IMR-90 (cell line): ENCODE measurements at regions of chr13 and their contacts with region 1.

Region 1: GRCh38 chr13:96020155-96020575 is 33.0 kb downstream of the UGGT2 start:
- DNase-seq: peak; percentile 67
- ATAC-seq: peak; percentile 96
- H3K4me3 ChIP-seq: no peak overlapping the region
- H3K27ac ChIP-seq: no peak overlapping the region
- H3K4me1 ChIP-seq: no peaks in the 10 kb centered on the region
- H3K27me3 ChIP-seq: no peaks in the 10 kb centered on the region
- CTCF ChIP-seq: peak; percentile 63
- POLR2A ChIP-seq: no peak
- RAD21 ChIP-seq: peak; percentile 67

Region 2: GRCh38 chr13:95438297-95438696 is 581.9 kb before region 1 on chr13:
- CTCF ChIA-PET with region 1: no interaction called
- POLR2A ChIA-PET with region 1: no interaction called
- dilution Hi-C with region 1: no loop called
- in situ Hi-C with region 1: no loop called
- intact Hi-C with region 1: no loop called
- DNase-seq: no peak
- ATAC-seq: no peak
- H3K4me3 ChIP-seq: no peak overlapping the region
- H3K27ac ChIP-seq: no peak overlapping the region
- H3K4me1 ChIP-seq: no peaks in the 10 kb centered on the region
- H3K27me3 ChIP-seq: peaks cover 6% of the 10 kb centered on the region; the same call in 1 of the 2 replicates
- CTCF ChIP-seq: no peak
- POLR2A ChIP-seq: no peak
- RAD21 ChIP-seq: no peak

Region 3: DNA sequence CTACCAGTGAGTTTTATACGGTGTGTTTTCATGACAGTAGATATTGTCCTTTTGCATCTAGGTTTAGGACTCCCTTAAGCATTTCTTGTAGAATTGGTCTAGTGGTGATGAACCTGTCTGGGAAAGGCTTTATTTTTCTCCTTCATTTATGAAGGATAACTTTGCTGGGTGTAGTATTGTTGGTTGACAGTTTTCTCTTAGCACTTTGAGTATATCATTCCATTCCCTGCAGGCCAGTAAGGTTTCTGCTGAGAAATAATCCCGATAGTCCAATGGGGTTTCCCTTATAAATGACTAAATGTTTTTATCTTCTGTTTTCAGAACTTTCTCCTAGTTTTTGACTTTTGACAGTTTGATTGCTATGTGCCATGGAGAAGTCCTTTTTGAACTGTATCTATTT is 286.0 kb before region 1 on chr13:
- CTCF ChIA-PET with region 1: no interaction called
- POLR2A ChIA-PET with region 1: no interaction called
- dilution Hi-C with region 1: no loop called
- in situ Hi-C with region 1: no loop called
- intact Hi-C with region 1: no loop called
- DNase-seq: no peak
- ATAC-seq: no peak
- H3K4me3 ChIP-seq: no peak overlapping the region
- H3K27ac ChIP-seq: no peak overlapping the region
- H3K4me1 ChIP-seq: no peaks in the 10 kb centered on the region
- H3K27me3 ChIP-seq: no peaks in the 10 kb centered on the region
- CTCF ChIP-seq: no peak
- POLR2A ChIP-seq: no peak
- RAD21 ChIP-seq: no peak

Region 4: DNA sequence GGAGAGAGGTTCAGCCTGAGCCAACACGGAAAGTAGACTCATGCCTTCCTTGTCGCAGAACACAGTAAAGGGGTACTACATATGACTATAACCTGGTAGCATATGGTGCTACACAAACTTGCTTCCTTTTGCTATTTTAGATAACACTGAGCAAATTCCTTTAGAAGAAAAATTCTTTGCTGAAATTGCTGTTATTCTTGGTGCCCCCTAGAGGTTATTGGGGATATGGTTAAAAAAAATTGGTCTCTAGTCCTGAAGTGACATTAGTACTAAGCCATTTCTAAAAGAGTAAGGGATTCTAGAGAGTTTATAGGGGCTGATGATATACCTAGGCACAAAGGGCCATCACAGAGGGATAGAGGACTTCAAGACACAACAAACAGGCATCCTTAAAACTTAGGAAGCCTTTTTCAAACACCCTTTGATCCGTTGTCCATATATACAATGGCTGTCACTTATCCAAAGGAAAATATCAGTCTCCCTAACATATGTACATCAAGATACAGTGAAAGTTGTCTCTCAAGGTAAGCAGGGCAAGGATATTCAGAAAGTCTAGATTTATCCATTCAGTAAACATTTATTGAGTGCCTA is 55.9 kb after region 1 on chr13:
- CTCF ChIA-PET with region 1: interaction called, 3 read pairs
- POLR2A ChIA-PET with region 1: no interaction called
- dilution Hi-C with region 1: no loop called
- in situ Hi-C with region 1: no loop called
- intact Hi-C with region 1: loop called (anchors 2 kb)
- DNase-seq: peak; percentile 23
- ATAC-seq: peak; percentile 54; the same call in 1 of the 2 replicates
- H3K4me3 ChIP-seq: no peak overlapping the region
- H3K27ac ChIP-seq: no peak overlapping the region
- H3K4me1 ChIP-seq: no peaks in the 10 kb centered on the region
- H3K27me3 ChIP-seq: peaks cover 4% of the 10 kb centered on the region
- CTCF ChIP-seq: peak; percentile 61
- POLR2A ChIP-seq: no peak
- RAD21 ChIP-seq: no peak

Region 5: GRCh38 chr13:96817336-96817941 is 797.3 kb after region 1 on chr13:
- CTCF ChIA-PET with region 1: interaction called, 8 read pairs
- POLR2A ChIA-PET with region 1: no interaction called
- dilution Hi-C with region 1: no loop called
- in situ Hi-C with region 1: loop called (anchors 25 kb)
- intact Hi-C with region 1: loop called (anchors 5 kb)
- DNase-seq: peak; percentile 10
- ATAC-seq: no peak
- H3K4me3 ChIP-seq: no peak overlapping the region
- H3K27ac ChIP-seq: no peak overlapping the region
- H3K4me1 ChIP-seq: no peaks in the 10 kb centered on the region
- H3K27me3 ChIP-seq: no peaks in the 10 kb centered on the region
- CTCF ChIP-seq: peak; percentile 45
- POLR2A ChIP-seq: no peak
- RAD21 ChIP-seq: peak; percentile 29